ENCODE measurements at regions of chr2 and their contacts with region 1.

Region 1: GRCh38 chr2:174748948-174749347 is 15.3 kb downstream of the CHRNA1 start:
- DNase-seq: peak; percentile 55
- H3K4me3 Mint-ChIP-seq: no peak overlapping the region
- H3K27ac Mint-ChIP-seq: no peak overlapping the region
- H3K4me1 Mint-ChIP-seq: peaks cover 44% of the 10 kb centered on the region
- H3K27me3 Mint-ChIP-seq: peaks cover 7% of the 10 kb centered on the region

Region 2: GRCh38 chr2:174465327-174465726 is 283.6 kb before region 1 on chr2:
- intact Hi-C with region 1: no loop called
- DNase-seq: no peak
- H3K4me3 Mint-ChIP-seq: no peak overlapping the region
- H3K27ac Mint-ChIP-seq: no peak overlapping the region
- H3K4me1 Mint-ChIP-seq: no peaks in the 10 kb centered on the region
- H3K27me3 Mint-ChIP-seq: no peaks in the 10 kb centered on the region

Region 3: DNA sequence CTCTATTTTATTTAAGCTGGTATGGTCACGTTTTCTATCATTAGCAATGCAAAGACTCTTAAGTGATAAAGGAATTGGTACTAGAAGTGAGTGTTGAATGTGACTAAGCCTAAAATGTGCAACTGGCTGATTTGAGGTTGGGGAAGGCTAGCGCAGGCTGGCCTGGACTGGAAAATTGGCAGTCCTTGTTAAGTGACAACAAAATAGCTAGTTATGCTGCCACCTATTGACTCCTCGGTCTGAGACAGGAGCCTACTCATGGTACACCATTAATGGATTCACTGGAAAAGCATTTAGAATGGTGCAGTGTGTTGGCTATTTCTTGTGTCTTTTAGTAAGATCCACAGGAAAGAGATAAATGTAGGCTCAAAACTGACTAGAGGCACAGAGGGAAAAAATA is 145.7 kb before region 1 on chr2:
- intact Hi-C with region 1: loop called (anchors 5 kb)
- DNase-seq: no peak
- H3K4me3 Mint-ChIP-seq: no peak overlapping the region
- H3K27ac Mint-ChIP-seq: peak overlapping the region; percentile 85
- H3K4me1 Mint-ChIP-seq: peaks cover 90% of the 10 kb centered on the region
- H3K27me3 Mint-ChIP-seq: no peaks in the 10 kb centered on the region

Region 4: DNA sequence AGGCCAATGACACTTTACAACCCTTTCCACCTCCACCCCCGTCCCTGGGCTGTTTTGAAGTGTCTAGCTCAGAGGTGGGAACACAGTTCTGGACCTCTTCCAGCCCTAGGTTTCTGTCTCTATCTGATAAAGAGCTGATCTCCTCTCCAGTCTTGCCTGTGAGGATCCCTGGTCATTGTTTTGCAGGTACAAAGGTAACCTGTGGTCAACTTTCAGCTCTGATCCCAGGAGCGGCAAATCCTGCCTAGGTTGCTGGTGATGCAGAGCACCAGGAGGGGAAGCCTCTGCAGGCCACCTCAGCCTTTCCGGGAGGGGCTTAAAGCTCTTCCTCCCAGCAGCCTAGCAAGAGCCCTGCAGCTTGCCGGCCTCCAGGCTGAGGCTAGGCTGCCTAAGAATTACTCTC is 81.6 kb before region 1 on chr2:
- intact Hi-C with region 1: no loop called
- DNase-seq: no peak
- H3K4me3 Mint-ChIP-seq: no peak overlapping the region
- H3K27ac Mint-ChIP-seq: no peak overlapping the region
- H3K4me1 Mint-ChIP-seq: peaks cover 44% of the 10 kb centered on the region
- H3K27me3 Mint-ChIP-seq: no peaks in the 10 kb centered on the region

Region 5: DNA sequence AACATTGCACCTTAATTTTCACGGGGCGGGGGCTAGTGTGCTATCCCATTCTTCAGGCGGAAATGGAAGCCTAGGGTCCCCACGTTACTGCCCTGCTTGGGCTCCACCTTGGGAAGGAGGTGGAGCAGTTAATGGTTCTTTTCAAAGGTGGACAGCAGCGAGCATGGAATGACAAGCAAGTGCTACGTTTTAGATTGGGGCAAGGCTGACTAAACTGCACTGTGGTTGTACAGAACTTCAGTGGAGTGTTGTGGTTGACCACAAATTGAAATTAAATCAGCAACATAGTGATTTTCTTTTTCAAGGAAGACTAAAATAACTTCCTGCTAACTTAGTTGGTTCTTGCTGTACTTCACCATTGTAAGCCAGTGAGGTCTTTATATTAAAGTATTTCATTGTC is 31.7 kb before region 1 on chr2:
- intact Hi-C with region 1: loop called (anchors 5 kb)
- DNase-seq: peak; percentile 17
- H3K4me3 Mint-ChIP-seq: peak overlapping the region; percentile 37
- H3K27ac Mint-ChIP-seq: no peak overlapping the region
- H3K4me1 Mint-ChIP-seq: peaks cover 38% of the 10 kb centered on the region
- H3K27me3 Mint-ChIP-seq: peaks cover 16% of the 10 kb centered on the region

Region 6: DNA sequence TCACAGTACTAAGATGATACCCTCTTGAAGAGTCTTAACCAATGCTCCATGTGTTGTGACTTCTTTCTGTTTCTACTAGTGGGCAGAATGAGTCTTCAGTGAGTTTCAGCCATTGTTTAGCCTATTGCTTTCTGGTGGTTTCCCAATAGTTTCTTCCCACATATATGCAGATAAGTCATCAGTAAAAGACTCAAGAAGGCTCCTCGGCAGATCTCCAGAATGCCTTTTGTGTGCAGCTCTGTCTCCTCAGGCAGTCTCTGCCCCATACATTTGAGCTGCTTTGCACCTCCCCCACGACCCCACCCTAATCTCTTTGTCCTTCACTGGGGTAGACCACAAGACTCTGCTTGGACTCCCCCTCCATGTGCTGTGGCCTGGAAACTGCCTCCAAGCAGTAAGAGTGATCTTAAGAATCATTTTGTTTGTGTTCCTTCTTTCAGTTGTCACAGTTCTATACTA is 86.9 kb after region 1 on chr2:
- intact Hi-C with region 1: loop called (anchors 1 kb)
- DNase-seq: no peak
- H3K4me3 Mint-ChIP-seq: peak overlapping the region; percentile 43
- H3K27ac Mint-ChIP-seq: peak overlapping the region; percentile 96
- H3K4me1 Mint-ChIP-seq: peaks cover 40% of the 10 kb centered on the region
- H3K27me3 Mint-ChIP-seq: no peaks in the 10 kb centered on the region

Region 7: GRCh38 chr2:174985630-174986029 is 236.7 kb after region 1 on chr2:
- intact Hi-C with region 1: loop called (anchors 1 kb)
- DNase-seq: no peak
- H3K4me3 Mint-ChIP-seq: no peak overlapping the region
- H3K27ac Mint-ChIP-seq: no peak overlapping the region
- H3K4me1 Mint-ChIP-seq: peaks cover 7% of the 10 kb centered on the region
- H3K27me3 Mint-ChIP-seq: peaks cover 20% of the 10 kb centered on the region

Region 8: GRCh38 chr2:175167792-175168563 is 419.0 kb after region 1 on chr2 and contains the start of gene ATF2:
- intact Hi-C with region 1: loop called (anchors 5 kb)
- DNase-seq: peak; percentile 98
- H3K4me3 Mint-ChIP-seq: peak within 1 kb of the TSS; percentile 97
- H3K27ac Mint-ChIP-seq: peak within 1 kb of the TSS; percentile 97
- H3K4me1 Mint-ChIP-seq: peaks cover 53% of the 10 kb centered on the region
- H3K27me3 Mint-ChIP-seq: no peaks in the 10 kb centered on the region
- total RNA-seq, gene ATF2: 57.0 and 59.7 TPM in 2 replicates

Region 9: DNA sequence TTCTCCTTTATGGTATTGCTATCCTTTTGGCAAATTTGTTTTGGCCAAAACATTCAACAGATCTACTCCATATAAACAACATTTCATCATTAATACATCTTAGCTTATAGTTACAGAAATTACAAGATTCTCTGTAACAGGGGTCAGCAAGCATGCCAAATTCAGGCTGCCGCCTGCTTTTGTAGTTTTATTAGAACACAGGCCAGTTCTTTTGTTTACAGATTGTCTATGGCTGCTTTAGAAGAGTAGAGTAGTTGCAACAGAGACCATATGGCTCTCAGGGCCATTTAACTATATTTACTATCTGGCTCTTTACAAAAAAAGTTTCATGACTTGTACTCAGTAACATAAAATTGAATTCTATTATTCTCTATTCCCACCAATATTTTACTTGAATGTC is 1199.2 kb after region 1 on chr2:
- intact Hi-C with region 1: no loop called
- DNase-seq: no peak
- H3K4me3 Mint-ChIP-seq: no peak overlapping the region
- H3K27ac Mint-ChIP-seq: no peak overlapping the region
- H3K4me1 Mint-ChIP-seq: no peaks in the 10 kb centered on the region
- H3K27me3 Mint-ChIP-seq: no peaks in the 10 kb centered on the region

Measured in activated T-helper 1 cell treated with anti-CD3 and anti-CD28 coated beads, Interleukin-12 subunit alpha, Interleukin-12 subunit beta, Interleukin-2, Interleukin-4 antibody, amounts not matched to agents 30 ng/mL and 10 ng/mL and 1 ng/mL, durations not matched to agents 14 hours and 24 hours and 36 hours (primary cell).